ENCODE measurements at regions of chr15 and their contacts with region 1.

Region 1: GRCh38 chr15:26891448-26892181 is 24.8 kb downstream of the GABRA5 start:
- DNase-seq: peak; percentile 79
- ATAC-seq: peak; percentile 55
- H3K4me3 Mint-ChIP-seq: no peak overlapping the region
- H3K27ac Mint-ChIP-seq: no peak overlapping the region
- H3K4me1 Mint-ChIP-seq: no peaks in the 10 kb centered on the region
- H3K27me3 Mint-ChIP-seq: peaks cover 14% of the 10 kb centered on the region

Region 2: GRCh38 chr15:27017168-27017809 is 125.7 kb after region 1 on chr15:
- CTCF ChIA-PET with region 1: interaction called, 3 read pairs
- POLR2A ChIA-PET with region 1: no interaction called
- intact Hi-C with region 1: loop called in 1 of 2 experiments (anchors 1 kb)
- DNase-seq: peak; percentile 53
- ATAC-seq: no peak
- H3K4me3 Mint-ChIP-seq: no peak overlapping the region
- H3K27ac Mint-ChIP-seq: no peak overlapping the region
- H3K4me1 Mint-ChIP-seq: no peaks in the 10 kb centered on the region
- H3K27me3 Mint-ChIP-seq: no peaks in the 10 kb centered on the region

Region 3: DNA sequence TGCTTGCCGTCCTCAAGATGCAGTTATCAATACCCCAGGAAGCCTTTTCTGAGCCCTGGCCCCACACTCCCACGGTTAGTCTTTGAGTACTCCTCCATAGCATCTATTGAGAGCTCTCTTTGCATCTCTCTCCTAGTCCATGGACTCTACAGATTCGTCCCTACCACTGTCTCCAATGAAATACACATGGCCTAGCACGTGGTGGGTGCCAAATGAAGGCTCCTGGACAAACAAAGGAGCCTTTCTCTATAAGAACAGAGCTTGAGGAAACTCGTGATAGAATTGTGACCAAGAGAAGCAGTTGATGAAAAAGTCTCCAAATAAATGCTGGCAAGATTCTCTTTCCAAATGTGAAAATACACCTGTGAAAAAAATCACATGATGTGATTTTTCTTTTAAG is 245.5 kb after region 1 on chr15:
- CTCF ChIA-PET with region 1: no interaction called
- POLR2A ChIA-PET with region 1: no interaction called
- intact Hi-C with region 1: no loop called
- DNase-seq: no peak
- ATAC-seq: no peak
- H3K4me3 Mint-ChIP-seq: no peak overlapping the region
- H3K27ac Mint-ChIP-seq: no peak overlapping the region
- H3K4me1 Mint-ChIP-seq: no peaks in the 10 kb centered on the region
- H3K27me3 Mint-ChIP-seq: peaks cover under 1% of the 10 kb centered on the region

Region 4: DNA sequence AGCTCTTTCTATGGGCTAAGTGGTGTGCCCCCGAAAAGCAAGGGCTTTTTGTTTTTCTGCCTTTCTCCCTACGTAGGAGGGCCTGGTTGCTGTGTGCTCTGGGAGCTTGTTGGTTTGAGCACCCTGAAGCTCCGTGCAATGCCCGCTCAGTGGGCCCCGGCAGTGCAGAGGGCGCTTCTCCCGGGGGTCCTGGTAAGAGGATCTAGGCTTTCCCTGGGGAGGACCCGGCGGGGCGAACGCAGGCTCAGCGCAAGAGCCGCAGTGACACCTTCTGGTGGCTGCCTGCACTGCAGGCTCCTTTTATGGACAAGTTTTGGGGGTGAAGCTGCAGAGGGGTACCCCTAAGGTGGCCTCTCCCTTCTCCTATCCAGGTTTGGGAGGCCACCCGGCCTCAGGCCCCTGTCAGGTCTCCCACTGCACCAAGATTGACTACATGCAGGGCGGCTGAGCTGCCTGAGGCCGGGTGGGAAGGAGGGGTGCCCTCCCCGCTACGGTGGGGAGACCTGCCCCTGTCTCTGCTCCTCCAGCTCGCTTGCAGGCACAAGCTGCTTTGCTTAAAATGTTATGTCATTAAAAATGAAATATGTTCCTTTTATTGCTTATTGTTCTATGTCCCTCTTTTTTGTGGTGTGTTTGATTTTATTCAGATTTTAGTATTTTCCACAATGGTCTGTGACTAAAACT is 467.3 kb after region 1 on chr15:
- CTCF ChIA-PET with region 1: interaction called, 13 read pairs
- POLR2A ChIA-PET with region 1: no interaction called
- intact Hi-C with region 1: loop called (anchors 1 to 2 kb)
- DNase-seq: peak; percentile 37
- ATAC-seq: no peak
- H3K4me3 Mint-ChIP-seq: no peak overlapping the region
- H3K27ac Mint-ChIP-seq: no peak overlapping the region
- H3K4me1 Mint-ChIP-seq: no peaks in the 10 kb centered on the region
- H3K27me3 Mint-ChIP-seq: no peaks in the 10 kb centered on the region

Measured in activated CD4-positive, alpha-beta T cell treated with anti-CD3 and anti-CD28 coated beads for 36 hours (primary cell).